IMR-90 (cell line): ENCODE measurements at regions of chr4 and their contacts with region 1.

Region 1: GRCh38 chr4:22389240-22389870 is 126.5 kb downstream of the ADGRA3 start:
- DNase-seq: peak; percentile 85
- ATAC-seq: peak; percentile 84
- H3K4me3 ChIP-seq: no peak overlapping the region
- H3K27ac ChIP-seq: no peak overlapping the region
- H3K4me1 ChIP-seq: peaks cover 8% of the 10 kb centered on the region
- H3K27me3 ChIP-seq: no peaks in the 10 kb centered on the region
- CTCF ChIP-seq: peak; percentile 96
- POLR2A ChIP-seq: no peak
- RAD21 ChIP-seq: peak; percentile 93

Region 2: DNA sequence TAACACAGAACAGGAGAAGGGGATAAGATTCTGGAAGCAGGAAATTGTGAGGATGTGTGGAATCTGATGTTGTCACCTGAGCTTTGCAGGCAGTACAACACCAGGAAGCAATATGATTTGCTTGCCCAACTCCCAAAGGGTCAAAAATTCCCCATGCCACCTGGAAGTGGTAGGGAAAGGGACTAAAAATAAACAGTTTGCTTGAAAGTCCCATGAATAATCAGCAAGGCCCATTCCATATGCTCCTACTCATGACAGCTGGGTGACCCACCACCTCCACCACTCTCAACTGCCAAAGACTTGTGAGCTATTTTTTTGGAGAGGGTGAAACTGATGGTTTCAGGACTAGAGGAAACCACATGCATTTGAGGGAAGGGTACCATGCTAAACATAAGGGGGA is 609.2 kb before region 1 on chr4:
- CTCF ChIA-PET with region 1: no interaction called
- POLR2A ChIA-PET with region 1: no interaction called
- dilution Hi-C with region 1: no loop called
- in situ Hi-C with region 1: loop called (anchors 5 kb)
- intact Hi-C with region 1: no loop called
- DNase-seq: peak; percentile 41
- ATAC-seq: peak; percentile 37; the same call in 1 of the 2 replicates
- H3K4me3 ChIP-seq: no peak overlapping the region
- H3K27ac ChIP-seq: no peak overlapping the region
- H3K4me1 ChIP-seq: no peaks in the 10 kb centered on the region
- H3K27me3 ChIP-seq: no peaks in the 10 kb centered on the region
- CTCF ChIP-seq: no peak
- POLR2A ChIP-seq: no peak
- RAD21 ChIP-seq: no peak

Region 3: DNA sequence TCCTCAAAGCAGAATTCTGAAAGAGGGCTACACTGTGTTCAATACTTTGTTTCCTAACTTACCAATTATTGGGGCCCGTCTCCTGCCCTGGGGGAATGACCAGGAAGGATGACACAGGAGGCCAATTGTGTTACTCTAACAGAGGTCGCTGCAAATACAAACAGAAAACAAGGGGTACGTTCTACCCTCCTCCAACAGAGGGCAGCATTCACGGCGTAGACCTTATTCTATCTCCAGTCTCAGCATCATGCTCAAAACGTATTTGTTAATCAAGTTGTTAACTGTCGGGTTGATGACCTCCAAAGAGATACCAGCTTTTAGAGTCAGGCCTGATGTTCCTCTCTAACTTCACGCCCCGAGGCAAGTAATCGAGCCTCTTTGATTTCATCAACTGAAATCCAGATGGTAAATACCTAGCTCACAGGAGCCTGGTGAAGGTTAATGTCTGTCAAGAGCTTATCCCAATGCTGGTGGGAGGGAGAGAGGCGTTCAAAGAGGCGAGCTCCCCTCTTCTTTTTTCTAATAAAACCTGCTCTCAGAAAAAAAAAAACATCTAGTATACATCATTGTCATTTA is 259.8 kb before region 1 on chr4:
- CTCF ChIA-PET with region 1: interaction called, 4 read pairs
- POLR2A ChIA-PET with region 1: no interaction called
- dilution Hi-C with region 1: no loop called
- in situ Hi-C with region 1: no loop called
- intact Hi-C with region 1: loop called (anchors 1 kb)
- DNase-seq: peak; percentile 26
- ATAC-seq: peak; percentile 57
- H3K4me3 ChIP-seq: no peak overlapping the region
- H3K27ac ChIP-seq: no peak overlapping the region
- H3K4me1 ChIP-seq: no peaks in the 10 kb centered on the region
- H3K27me3 ChIP-seq: no peaks in the 10 kb centered on the region
- CTCF ChIP-seq: peak; percentile 43
- POLR2A ChIP-seq: no peak
- RAD21 ChIP-seq: peak; percentile 55

Region 4: DNA sequence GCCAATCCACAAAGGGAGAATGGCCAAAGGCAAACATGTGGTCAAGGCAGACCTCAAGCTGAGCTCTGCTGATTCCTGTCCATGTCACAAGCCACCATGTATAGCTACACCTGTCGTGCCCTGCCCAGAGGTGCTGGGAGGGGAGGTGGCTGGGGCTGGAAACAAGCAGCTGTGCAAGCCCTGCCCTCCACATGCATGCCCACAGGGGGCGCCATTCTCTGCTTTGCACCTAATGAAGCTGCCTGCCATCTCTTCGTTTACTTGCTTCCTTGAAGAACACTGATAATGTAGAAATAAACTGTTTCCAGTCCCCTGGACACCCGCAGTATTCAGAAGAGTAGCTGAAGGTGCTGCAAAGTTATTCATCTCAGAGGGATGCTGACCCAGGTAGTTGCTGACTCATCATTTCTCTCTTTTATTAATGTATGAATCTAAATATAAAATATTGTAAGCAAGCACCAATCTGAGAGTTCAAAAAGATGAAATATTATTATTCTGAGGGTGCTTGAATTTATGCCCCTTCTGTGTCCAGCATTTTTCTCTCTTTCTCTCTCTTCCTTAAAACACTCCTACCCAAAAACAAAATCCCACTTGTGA is 152.1 kb before region 1 on chr4:
- CTCF ChIA-PET with region 1: no interaction called
- POLR2A ChIA-PET with region 1: no interaction called
- dilution Hi-C with region 1: no loop called
- in situ Hi-C with region 1: no loop called
- intact Hi-C with region 1: loop called (anchors 5 kb)
- DNase-seq: peak; percentile 13
- ATAC-seq: no peak
- H3K4me3 ChIP-seq: no peak overlapping the region
- H3K27ac ChIP-seq: no peak overlapping the region
- H3K4me1 ChIP-seq: no peaks in the 10 kb centered on the region
- H3K27me3 ChIP-seq: no peaks in the 10 kb centered on the region; the same call in 1 of the 2 replicates
- CTCF ChIP-seq: peak; percentile 42
- POLR2A ChIP-seq: no peak
- RAD21 ChIP-seq: peak; percentile 43; the same call in 1 of the 2 replicates

Region 5: DNA sequence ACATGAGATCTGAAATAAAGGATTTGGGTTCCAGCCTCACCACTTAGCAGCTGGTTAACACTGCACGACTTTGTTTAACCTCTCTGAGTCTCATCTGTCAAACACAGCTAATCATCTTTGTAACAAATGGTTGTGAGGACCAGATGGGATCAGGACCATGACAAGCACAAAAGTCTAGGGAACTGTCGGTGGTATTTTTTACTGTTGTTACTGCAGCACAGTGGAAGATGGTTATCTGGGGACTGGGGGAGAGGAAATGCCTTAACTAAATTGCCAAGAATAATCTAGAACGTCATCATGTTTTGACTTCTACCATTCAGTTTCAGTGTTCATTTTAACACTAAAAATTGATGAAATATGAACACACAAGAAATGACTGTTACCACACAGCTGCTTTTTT is 27.0 kb after region 1 on chr4:
- CTCF ChIA-PET with region 1: no interaction called
- POLR2A ChIA-PET with region 1: no interaction called
- dilution Hi-C with region 1: no loop called
- in situ Hi-C with region 1: no loop called
- intact Hi-C with region 1: loop called (anchors 1 kb)
- DNase-seq: peak; percentile 4
- ATAC-seq: 0 out of 2 replicates have a peak, but pooled peaks have one; percentile 24
- H3K4me3 ChIP-seq: no peak overlapping the region
- H3K27ac ChIP-seq: no peak overlapping the region
- H3K4me1 ChIP-seq: no peaks in the 10 kb centered on the region
- H3K27me3 ChIP-seq: no peaks in the 10 kb centered on the region
- CTCF ChIP-seq: no peak
- POLR2A ChIP-seq: no peak
- RAD21 ChIP-seq: no peak